ENCODE measurements at regions of chr14 and their contacts with region 1.

Region 1: DNA sequence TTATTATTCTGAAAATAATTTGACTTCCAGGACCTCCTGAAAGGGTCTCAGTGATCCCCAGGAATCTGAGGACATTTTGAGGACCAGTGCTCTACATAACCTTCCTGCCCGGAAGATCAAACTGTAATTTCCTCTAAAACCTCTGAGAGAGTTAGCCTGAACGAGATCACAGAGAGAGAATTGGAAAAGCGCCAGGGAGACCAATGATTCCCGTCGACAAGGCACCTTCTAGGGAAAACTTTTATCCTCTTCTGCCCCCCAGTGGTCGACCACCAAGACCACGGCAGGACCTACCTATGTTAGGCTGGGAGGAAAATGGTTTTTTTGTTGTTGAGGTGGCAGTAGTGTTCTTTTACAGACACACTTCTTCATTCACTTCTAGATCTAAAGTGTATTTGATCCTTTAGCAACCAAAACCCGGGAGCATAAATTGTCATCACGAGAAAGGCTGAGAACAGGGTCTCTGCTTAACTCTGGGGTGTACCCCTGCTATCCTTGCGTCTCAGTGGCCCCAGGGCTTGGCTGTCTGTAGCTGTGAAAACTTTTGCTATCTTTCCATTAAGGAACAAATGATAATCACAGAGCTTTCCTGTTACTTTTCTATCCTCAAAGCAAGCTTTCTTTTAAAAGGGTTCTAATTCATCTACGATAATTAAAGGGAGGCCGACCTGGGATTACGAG is 62.9 kb upstream of the NID2 start:
- DNase-seq: no peak
- H3K4me3 ChIP-seq: no peak overlapping the region
- H3K27ac ChIP-seq: no peak overlapping the region
- H3K4me1 ChIP-seq: peaks cover 0 to 6% (median 0%) of the 10 kb centered on the region in 3 donors
- H3K27me3 ChIP-seq: no peaks in the 10 kb centered on the region
- CTCF ChIP-seq: peak in 5 of 6 experiments; percentile 32 to 45 (median 39)
- POLR2A ChIP-seq: no peak

Region 2: GRCh38 chr14:51996148-51996746 is 135.5 kb before region 1 on chr14:
- intact Hi-C with region 1: loop called (anchors 5 kb)
- DNase-seq: no peak
- H3K4me3 ChIP-seq: no peak overlapping the region
- H3K27ac ChIP-seq: no peak overlapping the region
- H3K4me1 ChIP-seq: peaks cover 0 to 21% (median 2%) of the 10 kb centered on the region in 3 donors
- H3K27me3 ChIP-seq: no peaks in the 10 kb centered on the region
- CTCF ChIP-seq: peak in 5 of 6 experiments; percentile 30 to 64 (median 55)
- POLR2A ChIP-seq: no peak

Region 3: GRCh38 chr14:52043690-52044089 is 88.1 kb before region 1 on chr14:
- intact Hi-C with region 1: no loop called
- DNase-seq: no peak
- H3K4me3 ChIP-seq: no peak overlapping the region
- H3K27ac ChIP-seq: peak overlapping the region in 3 of 4 donors; percentile 22 to 69 (median 61)
- H3K4me1 ChIP-seq: peaks cover 0 to 49% (median 25%) of the 10 kb centered on the region in 3 donors
- H3K27me3 ChIP-seq: no peaks in the 10 kb centered on the region
- CTCF ChIP-seq: peak in 5 of 6 experiments; percentile 17 to 42 (median 24)
- POLR2A ChIP-seq: no peak

Region 4: GRCh38 chr14:52380294-52380693 is 248.5 kb after region 1 on chr14:
- intact Hi-C with region 1: no loop called
- DNase-seq: no peak
- H3K4me3 ChIP-seq: no peak overlapping the region
- H3K27ac ChIP-seq: no peak overlapping the region
- H3K4me1 ChIP-seq: no peaks in the 10 kb centered on the region
- H3K27me3 ChIP-seq: peaks cover 0 to 12% (median 0%) of the 10 kb centered on the region in 4 donors
- CTCF ChIP-seq: no peak
- POLR2A ChIP-seq: no peak

Measured in esophagus squamous epithelium (tissue), 5 donors.